ENCODE measurements at regions of chr7 and their contacts with region 1.

Region 1: GRCh38 chr7:123871998-123872867 is 27.3 kb downstream of the HYAL4 start:
- DNase-seq: peak; percentile 67
- ATAC-seq: peak; percentile 76

Region 2: DNA sequence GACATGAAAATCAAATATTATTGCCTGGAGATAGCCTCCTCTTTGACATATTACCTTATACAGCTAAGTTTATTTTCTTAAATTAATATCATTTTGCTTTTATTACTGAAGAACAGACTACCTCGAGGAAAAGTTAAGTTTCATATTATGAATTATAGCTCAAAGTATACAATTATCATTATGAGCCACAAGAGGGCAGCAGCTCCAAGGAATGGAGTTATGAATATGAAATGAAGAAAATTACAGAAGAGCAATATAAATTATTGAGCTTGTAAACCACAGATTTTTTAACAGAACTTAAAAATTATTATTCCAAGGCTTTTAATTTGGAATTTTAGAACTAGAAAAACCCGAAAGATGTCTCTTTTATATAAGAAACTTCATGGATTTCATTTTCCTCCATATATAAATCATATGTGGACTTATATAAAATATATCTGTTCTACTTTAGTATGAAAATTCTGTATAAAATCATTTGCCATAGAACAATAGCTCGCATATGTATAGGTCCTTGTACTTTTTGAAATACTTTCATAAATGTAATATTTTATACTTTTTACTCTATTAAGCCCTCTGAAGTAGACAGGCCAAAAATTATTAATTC is 377.9 kb before region 1 on chr7:
- intact Hi-C with region 1: loop called (anchors 10 kb)
- DNase-seq: no peak
- ATAC-seq: no peak

Region 3: GRCh38 chr7:124688991-124689390 is 816.8 kb after region 1 on chr7:
- intact Hi-C with region 1: no loop called
- DNase-seq: no peak
- ATAC-seq: no peak

Measured in Right ventricle myocardium inferior (tissue), 1 donor.